ENCODE measurements at regions of chr12 and their contacts with region 1.

Region 1: DNA sequence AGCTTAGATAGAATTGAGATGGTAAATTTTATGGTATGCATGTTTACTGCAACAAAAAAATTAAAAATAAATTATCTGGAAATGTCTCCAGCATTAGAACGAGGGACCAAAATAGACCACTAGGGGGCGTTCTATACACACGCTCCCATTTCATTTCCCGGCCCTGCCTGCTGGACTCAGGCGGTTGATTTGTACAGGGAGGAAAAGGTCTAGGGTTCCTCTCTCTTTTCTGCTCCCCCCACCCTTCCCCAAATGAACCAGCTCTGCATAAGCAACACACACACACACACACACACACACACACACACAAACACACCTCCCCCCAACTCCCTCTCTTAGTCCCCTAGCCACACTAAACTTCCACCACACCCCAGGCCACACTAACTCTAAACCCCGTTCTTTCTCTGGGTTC is 7.8 kb upstream of the DTX1 start:
- DNase-seq: no peak
- ATAC-seq: peak; percentile 87
- H3K4me3 ChIP-seq: no peak overlapping the region
- H3K27ac ChIP-seq: no peak overlapping the region
- H3K4me1 ChIP-seq: peaks cover 35% of the 10 kb centered on the region
- H3K27me3 ChIP-seq: no peaks in the 10 kb centered on the region
- CTCF ChIP-seq: peak; percentile 61 to 88 (median 75)
- EP300 ChIP-seq: no peak
- POLR2A ChIP-seq: no peak
- RAD21 ChIP-seq: peak; percentile 98

Region 2: GRCh38 chr12:112978163-112979040 is 70.3 kb before region 1 on chr12 and contains the start of gene OAS2:
- CTCF ChIA-PET with region 1: interaction called, 10 read pairs
- POLR2A ChIA-PET with region 1: no interaction called
- RAD21 ChIA-PET with region 1: no interaction called
- SMC1A ChIA-PET with region 1: interaction called, 3 read pairs
- in situ Hi-C with region 1: no loop called
- intact Hi-C with region 1: no loop called
- DNase-seq: peak; percentile 94
- ATAC-seq: peak; percentile 92
- H3K4me3 ChIP-seq: peak within 1 kb of the TSS; percentile 97
- H3K27ac ChIP-seq: peak within 1 kb of the TSS; percentile 100
- H3K4me1 ChIP-seq: peaks cover 13% of the 10 kb centered on the region
- H3K27me3 ChIP-seq: no peaks in the 10 kb centered on the region
- CTCF ChIP-seq: no peak
- EP300 ChIP-seq: peak in 1 of 2 experiments; percentile 11; a peak in 1 of 4 replicates
- POLR2A ChIP-seq: peak; percentile 88
- RAD21 ChIP-seq: no peak
- polyA plus RNA-seq, gene OAS2: 32.4 to 43.4 TPM

Region 3: DNA sequence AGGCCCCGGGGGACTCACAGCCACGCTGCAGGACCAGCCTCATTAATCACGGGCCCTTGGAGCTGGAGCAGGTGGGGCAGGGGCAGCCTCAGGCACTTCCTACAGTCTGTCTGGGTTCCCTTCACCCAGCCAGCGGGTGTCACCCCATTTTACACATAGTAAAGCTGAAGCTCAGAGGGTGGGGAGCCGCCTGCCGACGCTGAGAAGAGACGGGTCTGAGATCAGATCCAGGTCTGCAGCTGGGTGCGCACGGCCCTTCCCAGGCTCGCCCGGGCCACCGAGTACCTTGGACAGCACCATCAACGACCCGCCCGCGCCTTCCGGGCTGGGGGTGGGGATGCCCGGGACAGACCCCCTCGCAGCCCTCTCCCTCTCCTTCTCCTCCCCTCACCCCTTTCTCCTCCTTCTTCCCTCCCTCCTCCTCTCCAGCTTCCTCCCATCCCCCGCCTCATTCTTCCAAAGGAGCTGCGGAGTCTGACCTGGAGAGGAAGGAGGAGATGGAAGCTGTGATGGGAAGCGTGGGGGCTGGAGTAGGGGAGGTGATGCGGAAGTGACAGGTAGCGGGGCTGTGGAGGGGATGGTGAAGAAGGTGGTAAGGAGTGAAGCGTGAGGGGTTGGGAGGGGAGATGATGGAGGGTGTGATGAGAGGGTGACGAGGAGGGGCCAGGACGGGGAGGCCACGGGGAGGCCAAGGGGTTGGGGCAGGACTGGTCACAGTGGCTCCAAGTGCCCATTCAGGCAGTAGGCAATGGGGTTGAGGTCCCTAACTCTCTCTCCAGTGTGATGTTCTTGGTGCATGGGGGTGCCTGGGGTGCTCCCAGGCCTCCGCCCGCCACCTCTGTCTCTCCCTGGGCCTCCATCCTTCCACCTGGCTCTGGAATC is 16.6 kb after region 1 on chr12:
- CTCF ChIA-PET with region 1: interaction called, 78 read pairs
- POLR2A ChIA-PET with region 1: interaction called, 5 read pairs
- RAD21 ChIA-PET with region 1: interaction called, 6 read pairs
- SMC1A ChIA-PET with region 1: interaction called, 18 read pairs
- in situ Hi-C with region 1: no loop called
- intact Hi-C with region 1: no loop called
- DNase-seq: no peak
- ATAC-seq: peak; percentile 5; the same call in 2 of the 3 replicates
- H3K4me3 ChIP-seq: no peak overlapping the region
- H3K27ac ChIP-seq: no peak overlapping the region
- H3K4me1 ChIP-seq: peaks cover 39% of the 10 kb centered on the region
- H3K27me3 ChIP-seq: peaks cover 0 to 4% of the 10 kb centered on the region in 2 experiments; a peak in 1 of 4 replicates
- CTCF ChIP-seq: no peak
- EP300 ChIP-seq: no peak
- POLR2A ChIP-seq: no peak
- RAD21 ChIP-seq: no peak

Region 4: GRCh38 chr12:113086249-113087164 is 37.8 kb after region 1 on chr12:
- CTCF ChIA-PET with region 1: interaction called, 66 read pairs
- POLR2A ChIA-PET with region 1: no interaction called
- RAD21 ChIA-PET with region 1: interaction called, 48 read pairs
- SMC1A ChIA-PET with region 1: interaction called, 416 read pairs
- in situ Hi-C with region 1: loop called (anchors 10 kb)
- intact Hi-C with region 1: no loop called
- DNase-seq: peak; percentile 62
- ATAC-seq: peak; percentile 55
- H3K4me3 ChIP-seq: peak overlapping the region; percentile 2; the same call in 1 of the 2 replicates
- H3K27ac ChIP-seq: peak overlapping the region; percentile 80
- H3K4me1 ChIP-seq: peaks cover 67% of the 10 kb centered on the region
- H3K27me3 ChIP-seq: no peaks in the 10 kb centered on the region
- CTCF ChIP-seq: no peak
- EP300 ChIP-seq: 0 out of 4 replicates have a peak, but pooled peaks of 1 of the 2 experiments have one; percentile 38
- POLR2A ChIP-seq: no peak
- RAD21 ChIP-seq: no peak

Region 5: GRCh38 chr12:113098446-113098896 is 49.7 kb after region 1 on chr12:
- CTCF ChIA-PET with region 1: interaction called, 121 read pairs
- POLR2A ChIA-PET with region 1: interaction called, 4 read pairs
- RAD21 ChIA-PET with region 1: interaction called, 50 read pairs
- SMC1A ChIA-PET with region 1: interaction called, 416 read pairs
- in situ Hi-C with region 1: loop called (anchors 10 kb)
- intact Hi-C with region 1: loop called (anchors 1 kb)
- DNase-seq: no peak
- ATAC-seq: peak; percentile 91
- H3K4me3 ChIP-seq: no peak overlapping the region
- H3K27ac ChIP-seq: no peak overlapping the region
- H3K4me1 ChIP-seq: peaks cover 10% of the 10 kb centered on the region; the same call in 1 of the 2 replicates
- H3K27me3 ChIP-seq: no peaks in the 10 kb centered on the region
- CTCF ChIP-seq: peak; percentile 95 to 98 (median 97); a peak in 5 of 6 replicates
- EP300 ChIP-seq: no peak
- POLR2A ChIP-seq: no peak
- RAD21 ChIP-seq: peak; percentile 93

Region 6: GRCh38 chr12:113152835-113153814 is 104.4 kb after region 1 on chr12:
- CTCF ChIA-PET with region 1: interaction called, 33 read pairs
- POLR2A ChIA-PET with region 1: no interaction called
- RAD21 ChIA-PET with region 1: interaction called, 16 read pairs
- SMC1A ChIA-PET with region 1: interaction called, 21 read pairs
- in situ Hi-C with region 1: loop called (anchors 5 kb)
- intact Hi-C with region 1: loop called (anchors 1 kb)
- DNase-seq: no peak
- ATAC-seq: peak; percentile 89
- H3K4me3 ChIP-seq: peak overlapping the region; percentile 59; the same call in 1 of the 2 replicates
- H3K27ac ChIP-seq: no peak overlapping the region
- H3K4me1 ChIP-seq: peaks cover 15% of the 10 kb centered on the region
- H3K27me3 ChIP-seq: peaks cover 7 to 8% of the 10 kb centered on the region in 2 experiments; a peak in 2 of 4 replicates
- CTCF ChIP-seq: peak; percentile 45 to 77 (median 53); a peak in 5 of 6 replicates
- EP300 ChIP-seq: no peak
- POLR2A ChIP-seq: no peak
- RAD21 ChIP-seq: peak; percentile 59